Tibial artery (tissue), 4 donors: ENCODE measurements at regions of chr5 and their contacts with region 1.

Region 1: DNA sequence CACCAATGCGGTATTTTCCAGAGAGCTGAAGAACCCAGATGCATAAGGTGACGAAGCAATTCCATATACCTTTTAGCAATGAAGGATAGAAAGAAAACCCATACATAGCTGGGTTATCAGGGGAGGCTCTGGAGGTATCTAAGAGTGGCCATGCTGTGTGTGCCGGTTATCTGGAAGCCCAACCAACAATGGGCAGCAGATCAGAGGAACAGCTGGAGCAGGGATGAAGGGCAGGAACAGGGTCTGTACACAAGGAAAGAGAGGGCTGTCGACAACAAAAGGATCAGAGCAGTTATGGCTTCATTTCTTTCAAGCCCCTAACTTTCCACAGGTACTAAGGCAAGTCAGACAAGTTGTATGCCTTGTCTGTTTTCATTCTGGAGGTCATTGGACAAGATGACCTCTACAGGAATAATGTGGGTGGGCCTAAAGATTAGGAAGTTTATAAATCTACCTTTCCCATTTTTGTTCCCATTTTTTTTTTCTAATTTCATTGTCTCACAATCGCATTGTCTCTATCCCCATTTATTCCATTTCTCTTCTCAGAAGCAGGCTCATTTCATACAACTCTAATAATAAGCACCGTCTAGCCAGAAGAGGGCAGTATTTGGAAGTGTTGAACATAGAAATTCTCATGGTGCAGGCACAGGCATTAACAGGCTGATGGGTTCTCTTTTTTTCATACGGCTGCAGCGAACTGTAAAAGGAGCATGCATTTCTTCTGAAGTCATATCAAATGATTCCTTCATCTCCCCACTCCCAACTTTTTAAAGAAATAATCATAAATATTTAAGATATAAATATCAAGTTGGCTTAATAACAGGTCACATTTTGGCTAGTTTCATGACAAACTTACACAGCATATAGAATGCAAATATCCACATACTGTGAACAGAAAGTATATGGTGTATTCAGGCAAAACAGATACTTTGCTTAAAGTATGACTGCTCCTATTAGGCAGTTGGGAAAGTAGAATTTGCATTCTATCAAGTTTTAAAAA is 63.5 kb downstream of the ZNF474 start:
- DNase-seq: no peak
- H3K4me3 ChIP-seq: no peak overlapping the region
- H3K27ac ChIP-seq: no peak overlapping the region
- H3K4me1 ChIP-seq: peaks cover 0 to 3% (median 0%) of the 10 kb centered on the region in 4 donors
- H3K27me3 ChIP-seq: no peaks in the 10 kb centered on the region
- CTCF ChIP-seq: peak; percentile 55 to 72

Region 2: GRCh38 chr5:121533814-121534213 is 659.0 kb before region 1 on chr5:
- intact Hi-C with region 1: no loop called
- DNase-seq: no peak
- H3K4me3 ChIP-seq: no peak overlapping the region
- H3K27ac ChIP-seq: no peak overlapping the region
- H3K4me1 ChIP-seq: no peaks in the 10 kb centered on the region
- H3K27me3 ChIP-seq: no peaks in the 10 kb centered on the region
- CTCF ChIP-seq: no peak

Region 3: GRCh38 chr5:121624035-121624434 is 568.8 kb before region 1 on chr5:
- intact Hi-C with region 1: no loop called
- DNase-seq: no peak
- H3K4me3 ChIP-seq: no peak overlapping the region
- H3K27ac ChIP-seq: no peak overlapping the region
- H3K4me1 ChIP-seq: no peaks in the 10 kb centered on the region
- H3K27me3 ChIP-seq: no peaks in the 10 kb centered on the region
- CTCF ChIP-seq: no peak

Region 4: GRCh38 chr5:122053181-122054109 is 139.4 kb before region 1 on chr5:
- intact Hi-C with region 1: no loop called
- DNase-seq: peak; percentile 24 to 63
- H3K4me3 ChIP-seq: no peak overlapping the region
- H3K27ac ChIP-seq: no peak overlapping the region
- H3K4me1 ChIP-seq: no peaks in the 10 kb centered on the region
- H3K27me3 ChIP-seq: no peaks in the 10 kb centered on the region
- CTCF ChIP-seq: no peak

Region 5: GRCh38 chr5:122252319-122252718 is 59.5 kb after region 1 on chr5:
- intact Hi-C with region 1: no loop called
- DNase-seq: no peak
- H3K4me3 ChIP-seq: no peak overlapping the region
- H3K27ac ChIP-seq: no peak overlapping the region
- H3K4me1 ChIP-seq: no peaks in the 10 kb centered on the region
- H3K27me3 ChIP-seq: no peaks in the 10 kb centered on the region
- CTCF ChIP-seq: no peak

Region 6: GRCh38 chr5:122415030-122415800 is 222.4 kb after region 1 on chr5:
- intact Hi-C with region 1: loop called (anchors 2 kb)
- DNase-seq: peak; percentile 53 to 70
- H3K4me3 ChIP-seq: no peak overlapping the region
- H3K27ac ChIP-seq: no peak overlapping the region
- H3K4me1 ChIP-seq: peaks cover 0 to 5% (median 0%) of the 10 kb centered on the region in 4 donors
- H3K27me3 ChIP-seq: no peaks in the 10 kb centered on the region
- CTCF ChIP-seq: peak; percentile 69 to 72

Region 7: GRCh38 chr5:122500245-122501075 is 307.7 kb after region 1 on chr5:
- intact Hi-C with region 1: loop called (anchors 10 kb)
- DNase-seq: peak; percentile 52 to 74
- H3K4me3 ChIP-seq: peak overlapping the region; percentile 14 to 29
- H3K27ac ChIP-seq: peak overlapping the region; percentile 61 to 70
- H3K4me1 ChIP-seq: peaks cover 0 to 31% (median 13%) of the 10 kb centered on the region in 4 donors
- H3K27me3 ChIP-seq: no peaks in the 10 kb centered on the region
- CTCF ChIP-seq: peak; percentile 43 to 57